Posterior cingulate gyrus (tissue), 11 donors: ENCODE measurements at regions of chr2 and their contacts with region 1.

Region 1: DNA sequence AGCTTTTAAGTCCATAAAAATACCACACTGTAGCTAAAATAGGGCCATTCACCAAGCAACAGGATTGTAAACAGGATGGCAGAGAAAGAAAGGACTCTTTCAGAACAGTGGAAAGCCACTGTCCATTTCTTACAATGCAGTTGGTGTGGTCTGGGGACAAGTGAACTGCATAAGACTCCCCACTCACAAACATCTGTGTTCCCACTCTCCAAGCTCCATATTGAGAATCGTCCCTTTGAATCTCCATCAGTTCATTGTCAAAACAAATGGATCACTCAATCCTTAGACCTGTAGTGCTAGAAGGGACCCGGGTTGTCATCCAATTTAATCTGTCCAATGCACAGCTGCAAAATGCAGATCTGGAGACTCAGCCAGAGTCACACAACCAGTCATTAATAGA is 347.4 kb upstream of the KLHL29 start:
- DNase-seq: peak in 4 of 10 donors; percentile 11 to 85 (median 38)

Region 2: DNA sequence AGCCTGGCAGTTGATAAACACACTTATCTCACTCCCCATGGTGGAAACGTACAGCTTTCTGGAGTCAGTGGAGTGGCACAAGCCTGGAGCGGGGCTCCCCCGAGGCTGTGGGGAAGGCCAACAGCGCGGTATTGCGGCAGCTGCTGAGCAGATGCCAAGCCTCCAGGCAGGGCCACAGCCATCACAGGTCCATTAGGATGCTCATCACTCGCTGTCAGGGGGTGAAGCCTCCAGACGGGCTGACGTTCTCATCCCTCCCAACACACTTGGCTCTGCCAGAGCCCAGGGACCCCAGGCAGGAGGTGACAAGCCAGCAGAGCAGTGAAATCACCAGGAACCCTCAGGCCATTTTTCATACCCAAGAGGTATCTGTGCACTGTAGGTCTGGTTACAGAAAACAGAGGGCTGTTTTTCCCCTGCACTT is 181.8 kb before region 1 on chr2:
- intact Hi-C with region 1: loop called (anchors 5 kb)
- DNase-seq: peak; percentile 5 to 91 (median 32)